Caco-2 (cell line): ENCODE measurements at regions of chr16 and their contacts with region 1.

Region 1: DNA sequence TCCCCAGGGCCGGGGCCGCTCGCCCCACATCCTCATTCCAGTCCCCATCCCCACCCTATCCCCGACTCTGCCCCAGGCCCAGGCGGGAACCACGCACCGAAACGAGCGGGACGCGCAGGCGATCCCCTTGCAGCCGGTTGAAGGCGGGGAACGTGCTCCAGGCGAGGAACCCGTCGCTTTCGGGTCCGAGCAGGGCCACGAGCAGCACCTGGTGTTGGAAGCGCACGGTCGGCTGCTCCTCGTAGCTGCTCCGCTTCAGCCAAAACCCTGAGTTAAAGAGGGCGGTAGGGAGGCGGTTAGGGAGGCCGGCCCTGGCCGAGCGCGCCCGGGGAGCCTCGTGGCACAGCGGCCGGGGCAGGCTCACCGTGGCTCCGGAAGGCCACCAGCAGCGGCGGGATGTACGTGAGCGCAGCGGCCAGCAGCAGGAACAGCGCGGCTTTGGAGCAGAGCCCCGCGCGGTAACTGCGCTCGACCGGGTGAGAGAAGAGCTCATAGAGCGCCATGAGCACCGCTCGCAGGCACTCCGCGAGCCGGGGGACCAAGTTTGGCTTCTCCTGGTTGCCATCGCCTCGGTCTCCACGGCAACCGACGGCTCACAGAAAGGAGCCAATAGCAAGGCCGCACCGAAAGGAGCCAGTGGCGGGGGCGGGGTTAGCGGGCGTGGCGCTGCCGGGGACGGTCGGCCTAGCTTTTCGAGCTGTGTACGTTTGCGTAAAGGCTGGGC is at the start of gene TMEM231:
- DNase-seq: peak; percentile 95 to 96
- H3K4me3 ChIP-seq: peak within 1 kb of the TSS; percentile 76
- H3K4me3 Mint-ChIP-seq: peak within 1 kb of the TSS; percentile 98
- H3K27ac Mint-ChIP-seq: peak within 1 kb of the TSS; percentile 98
- H3K4me1 ChIP-seq: no peaks in the 10 kb centered on the region
- H3K4me1 Mint-ChIP-seq: peaks cover 6% of the 10 kb centered on the region
- H3K27me3 ChIP-seq: no peaks in the 10 kb centered on the region
- H3K27me3 Mint-ChIP-seq: no peaks in the 10 kb centered on the region
- CTCF ChIP-seq: no peak
- total RNA-seq, gene TMEM231: 5.2 and 6.6 TPM in 2 replicates

Region 2: GRCh38 chr16:75534560-75535205 is 21.2 kb before region 1 on chr16:
- CTCF ChIA-PET with region 1: no interaction called
- POLR2A ChIA-PET with region 1: no interaction called
- intact Hi-C with region 1: no loop called
- DNase-seq: peak in 1 of 2 experiments; percentile 23
- H3K4me3 ChIP-seq: no peak overlapping the region
- H3K4me3 Mint-ChIP-seq: no peak overlapping the region
- H3K27ac Mint-ChIP-seq: no peak overlapping the region
- H3K4me1 ChIP-seq: no peaks in the 10 kb centered on the region
- H3K4me1 Mint-ChIP-seq: no peaks in the 10 kb centered on the region
- H3K27me3 ChIP-seq: no peaks in the 10 kb centered on the region
- H3K27me3 Mint-ChIP-seq: no peaks in the 10 kb centered on the region
- CTCF ChIP-seq: no peak

Region 3: GRCh38 chr16:75566040-75566810 is 10.4 kb after region 1 on chr16 and contains the start of gene GABARAPL2:
- CTCF ChIA-PET with region 1: interaction called, 7 read pairs
- POLR2A ChIA-PET with region 1: interaction called, 5 read pairs
- intact Hi-C with region 1: loop called (anchors 1 kb)
- DNase-seq: peak; percentile 88 to 95
- H3K4me3 ChIP-seq: peak within 1 kb of the TSS; percentile 44
- H3K4me3 Mint-ChIP-seq: peak within 1 kb of the TSS; percentile 85
- H3K27ac Mint-ChIP-seq: peak within 1 kb of the TSS; percentile 58
- H3K4me1 ChIP-seq: 0 out of 2 replicates have a peak, but pooled peaks cover 10% of the 10 kb centered on the region
- H3K4me1 Mint-ChIP-seq: no peaks in the 10 kb centered on the region
- H3K27me3 ChIP-seq: no peaks in the 10 kb centered on the region
- H3K27me3 Mint-ChIP-seq: peaks cover 10% of the 10 kb centered on the region
- CTCF ChIP-seq: no peak
- total RNA-seq, gene GABARAPL2: 82.6 and 88.2 TPM in 2 replicates

Region 4: DNA sequence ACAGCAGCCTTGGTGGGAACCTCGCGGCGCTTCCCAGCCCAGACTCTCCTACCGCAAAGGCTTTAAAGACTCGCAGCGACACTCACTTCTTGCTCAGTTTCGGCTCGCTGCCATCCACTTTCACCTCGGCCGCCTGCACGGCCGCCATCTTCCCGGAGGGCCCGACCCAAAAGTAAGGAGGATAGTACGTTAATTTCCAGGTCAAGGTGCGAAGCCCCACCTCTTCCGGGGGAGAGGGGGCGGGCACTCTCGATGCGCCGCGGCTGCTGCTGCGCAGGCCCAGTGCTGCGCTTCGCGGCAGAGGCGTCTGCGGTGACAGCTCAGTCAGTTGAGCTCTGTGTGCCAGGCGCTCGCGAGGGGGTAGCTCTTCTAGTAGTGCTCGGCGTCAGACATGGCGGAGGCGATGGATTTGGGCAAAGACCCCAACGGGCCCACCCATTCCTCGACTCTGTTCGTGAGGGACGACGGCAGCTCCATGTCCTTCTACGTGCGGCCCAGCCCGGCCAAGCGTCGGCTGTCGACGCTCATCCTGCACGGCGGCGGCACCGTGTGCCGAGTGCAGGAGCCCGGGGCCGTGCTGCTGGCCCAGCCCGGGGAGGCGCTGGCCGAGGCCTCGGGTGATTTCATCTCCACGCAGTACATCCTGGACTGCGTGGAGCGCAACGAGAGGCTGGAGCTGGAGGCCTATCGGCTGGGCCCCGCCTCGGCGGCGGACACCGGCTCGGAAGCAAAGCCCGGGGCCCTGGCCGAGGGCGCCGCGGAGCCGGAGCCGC is 91.8 kb after region 1 on chr16 and contains the starts of genes KARS1 and TERF2IP:
- CTCF ChIA-PET with region 1: no interaction called
- POLR2A ChIA-PET with region 1: no interaction called
- intact Hi-C with region 1: loop called (anchors 2 kb)
- DNase-seq: peak; percentile 93 to 95
- H3K4me3 ChIP-seq: peak within 1 kb of the TSS; percentile 97
- H3K4me3 Mint-ChIP-seq: peak within 1 kb of the TSS; percentile 91
- H3K27ac Mint-ChIP-seq: peak within 1 kb of the TSS; percentile 98
- H3K4me1 ChIP-seq: peaks cover 12% of the 10 kb centered on the region
- H3K4me1 Mint-ChIP-seq: peaks cover 18% of the 10 kb centered on the region
- H3K27me3 ChIP-seq: no peaks in the 10 kb centered on the region
- H3K27me3 Mint-ChIP-seq: no peaks in the 10 kb centered on the region
- CTCF ChIP-seq: no peak
- total RNA-seq, gene KARS1: 244 and 245 TPM in 2 replicates
- total RNA-seq, gene TERF2IP: 25.1 and 27.1 TPM in 2 replicates